Caco-2 (cell line): ENCODE measurements at regions of chr2 and their contacts with region 1.

Region 1: GRCh38 chr2:76197842-76198448 is 487.2 kb upstream of the GCFC2 start:
- DNase-seq: peak; percentile 64 to 74
- H3K4me3 ChIP-seq: no peak overlapping the region
- H3K4me3 Mint-ChIP-seq: no peak overlapping the region
- H3K27ac Mint-ChIP-seq: no peak overlapping the region
- H3K4me1 ChIP-seq: 0 out of 2 replicates have a peak, but pooled peaks cover under 1% of the 10 kb centered on the region
- H3K4me1 Mint-ChIP-seq: no peaks in the 10 kb centered on the region
- H3K27me3 ChIP-seq: no peaks in the 10 kb centered on the region
- H3K27me3 Mint-ChIP-seq: no peaks in the 10 kb centered on the region
- CTCF ChIP-seq: peak; percentile 64

Region 2: DNA sequence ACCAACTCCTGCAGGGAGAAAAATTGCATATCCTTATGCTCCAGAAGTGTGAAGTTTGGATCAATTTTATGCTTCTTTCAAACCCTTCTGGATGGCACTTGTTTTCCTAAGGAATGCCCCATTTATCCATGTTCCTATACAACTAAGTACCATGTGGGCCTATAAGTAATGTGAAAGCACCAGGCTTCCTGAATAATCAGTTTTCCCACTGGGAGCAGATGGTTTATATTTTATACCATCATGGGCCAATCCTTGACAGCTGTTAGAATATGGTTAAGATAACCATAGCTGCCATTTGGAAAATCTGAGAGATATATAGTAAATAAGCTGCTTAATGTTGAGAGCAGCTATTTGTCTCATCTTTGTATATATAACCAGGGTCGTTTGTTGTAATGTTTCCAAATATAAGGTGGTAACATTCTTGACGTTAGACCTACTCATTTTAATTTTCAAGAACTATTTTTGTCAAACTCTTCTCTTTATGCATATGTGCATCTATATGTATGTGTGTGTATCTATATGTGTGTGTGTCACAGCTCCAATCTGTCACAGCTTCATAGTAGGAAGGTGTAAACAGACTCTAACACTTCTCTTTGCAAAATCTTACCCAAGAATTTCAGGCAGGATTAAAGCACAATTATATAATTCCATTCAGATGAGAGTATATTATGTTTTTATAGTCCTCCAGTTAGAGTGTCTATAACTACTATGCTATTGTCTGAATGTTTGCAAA is 28.5 kb before region 1 on chr2:
- CTCF ChIA-PET with region 1: no interaction called
- POLR2A ChIA-PET with region 1: no interaction called
- intact Hi-C with region 1: loop called (anchors 2 kb)
- DNase-seq: no peak
- H3K4me3 ChIP-seq: no peak overlapping the region
- H3K4me3 Mint-ChIP-seq: no peak overlapping the region
- H3K27ac Mint-ChIP-seq: no peak overlapping the region
- H3K4me1 ChIP-seq: peaks cover 21% of the 10 kb centered on the region
- H3K4me1 Mint-ChIP-seq: peaks cover 30% of the 10 kb centered on the region
- H3K27me3 ChIP-seq: no peaks in the 10 kb centered on the region
- H3K27me3 Mint-ChIP-seq: no peaks in the 10 kb centered on the region
- CTCF ChIP-seq: no peak

Region 3: GRCh38 chr2:76296438-76296837 is 98.5 kb after region 1 on chr2:
- CTCF ChIA-PET with region 1: no interaction called
- POLR2A ChIA-PET with region 1: no interaction called
- intact Hi-C with region 1: no loop called
- DNase-seq: no peak
- H3K4me3 ChIP-seq: no peak overlapping the region
- H3K4me3 Mint-ChIP-seq: no peak overlapping the region
- H3K27ac Mint-ChIP-seq: no peak overlapping the region
- H3K4me1 ChIP-seq: no peaks in the 10 kb centered on the region; the same call in 1 of the 2 replicates
- H3K4me1 Mint-ChIP-seq: no peaks in the 10 kb centered on the region
- H3K27me3 ChIP-seq: no peaks in the 10 kb centered on the region
- H3K27me3 Mint-ChIP-seq: no peaks in the 10 kb centered on the region
- CTCF ChIP-seq: no peak

Region 4: GRCh38 chr2:76381624-76382023 is 183.7 kb after region 1 on chr2:
- CTCF ChIA-PET with region 1: no interaction called
- POLR2A ChIA-PET with region 1: no interaction called
- intact Hi-C with region 1: no loop called
- DNase-seq: no peak
- H3K4me3 ChIP-seq: no peak overlapping the region
- H3K4me3 Mint-ChIP-seq: no peak overlapping the region
- H3K27ac Mint-ChIP-seq: no peak overlapping the region
- H3K4me1 ChIP-seq: no peaks in the 10 kb centered on the region
- H3K4me1 Mint-ChIP-seq: no peaks in the 10 kb centered on the region
- H3K27me3 ChIP-seq: no peaks in the 10 kb centered on the region
- H3K27me3 Mint-ChIP-seq: peaks cover 4% of the 10 kb centered on the region
- CTCF ChIP-seq: no peak

Region 5: DNA sequence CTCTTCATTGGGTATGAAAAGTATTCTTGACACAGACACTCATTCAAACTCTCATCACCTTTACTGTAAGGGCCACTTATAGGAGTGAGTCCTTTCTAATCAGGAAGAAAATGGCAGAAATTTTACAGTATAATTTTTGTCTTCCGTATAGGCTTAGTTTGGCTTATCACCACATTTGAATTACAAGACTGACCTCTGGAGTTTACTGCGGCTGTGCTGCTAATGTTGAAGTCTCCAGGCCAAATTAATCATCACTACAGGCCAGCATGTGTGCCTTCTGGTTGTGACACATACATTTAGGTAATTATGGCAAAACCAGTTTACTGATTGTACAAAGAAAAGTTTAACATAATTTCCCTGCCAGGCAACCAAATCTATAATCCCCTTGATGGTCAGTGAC is 266.4 kb after region 1 on chr2:
- CTCF ChIA-PET with region 1: no interaction called
- POLR2A ChIA-PET with region 1: no interaction called
- intact Hi-C with region 1: loop called (anchors 5 kb)
- DNase-seq: no peak
- H3K4me3 ChIP-seq: no peak overlapping the region
- H3K4me3 Mint-ChIP-seq: no peak overlapping the region
- H3K27ac Mint-ChIP-seq: no peak overlapping the region
- H3K4me1 ChIP-seq: no peaks in the 10 kb centered on the region
- H3K4me1 Mint-ChIP-seq: no peaks in the 10 kb centered on the region
- H3K27me3 ChIP-seq: no peaks in the 10 kb centered on the region
- H3K27me3 Mint-ChIP-seq: no peaks in the 10 kb centered on the region
- CTCF ChIP-seq: no peak

Region 6: GRCh38 chr2:76599732-76600368 is 401.9 kb after region 1 on chr2:
- CTCF ChIA-PET with region 1: interaction called, 4 read pairs
- POLR2A ChIA-PET with region 1: no interaction called
- intact Hi-C with region 1: loop called (anchors 1 kb)
- DNase-seq: peak; percentile 82 to 85
- H3K4me3 ChIP-seq: no peak overlapping the region
- H3K4me3 Mint-ChIP-seq: no peak overlapping the region
- H3K27ac Mint-ChIP-seq: no peak overlapping the region
- H3K4me1 ChIP-seq: no peaks in the 10 kb centered on the region
- H3K4me1 Mint-ChIP-seq: no peaks in the 10 kb centered on the region
- H3K27me3 ChIP-seq: no peaks in the 10 kb centered on the region; the same call in 1 of the 2 replicates
- H3K27me3 Mint-ChIP-seq: peaks cover 4% of the 10 kb centered on the region
- CTCF ChIP-seq: peak; percentile 74 to 89